ENCODE measurements at regions of chr2 and their contacts with region 1.

Region 1: DNA sequence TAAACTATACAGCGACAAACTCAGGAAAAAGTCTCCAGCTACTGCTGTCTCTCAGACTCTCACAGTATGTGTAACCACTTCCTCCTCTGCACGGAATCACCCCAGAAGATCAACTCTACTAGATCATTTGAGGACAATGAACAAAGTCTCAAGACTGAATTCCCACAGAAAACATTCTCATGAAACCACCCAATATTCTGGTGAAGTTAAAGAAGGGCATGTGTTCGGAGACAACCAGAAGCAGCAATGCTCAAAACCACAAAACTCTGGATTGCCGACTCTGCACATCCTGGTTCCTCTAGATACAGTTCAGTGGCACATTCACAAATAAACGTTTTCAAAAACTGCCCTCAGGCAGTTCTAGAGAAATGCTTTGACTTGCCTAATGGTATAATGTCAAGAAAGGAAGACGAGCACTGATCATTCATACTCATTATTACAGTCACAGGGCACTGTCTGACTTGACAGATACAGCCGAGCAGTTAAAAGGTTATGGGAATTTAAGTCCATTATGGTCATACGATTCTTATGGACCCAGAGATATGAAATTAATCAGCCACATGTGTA is 91.9 kb upstream of the STK17B start:
- DNase-seq: peak in 7 of 9 donors; percentile 70 to 88 (median 83)
- ATAC-seq: peak; percentile 90
- H3K4me3 ChIP-seq: peak overlapping the region; percentile 31
- H3K4me3 Mint-ChIP-seq: peak overlapping the region; percentile 63 to 90 (median 82)
- H3K27ac ChIP-seq: peak overlapping the region; percentile 87
- H3K27ac Mint-ChIP-seq: peak overlapping the region; percentile 90 to 99 (median 97)
- H3K4me1 ChIP-seq: peaks cover 53 to 82% of the 10 kb centered on the region in 2 donors
- H3K4me1 Mint-ChIP-seq: peaks cover 39 to 94% (median 89%) of the 10 kb centered on the region in 7 donors
- H3K27me3 ChIP-seq: no peaks in the 10 kb centered on the region
- H3K27me3 Mint-ChIP-seq: no peaks in the 10 kb centered on the region

Region 2: GRCh38 chr2:194464964-194465638 is 1798.2 kb before region 1 on chr2:
- CTCF ChIA-PET with region 1: no interaction called
- POLR2A ChIA-PET with region 1: no interaction called
- intact Hi-C with region 1: loop called in 1 of 2 experiments (anchors 5 kb)
- DNase-seq: peak in 2 of 9 donors; percentile 11 to 25
- ATAC-seq: no peak
- H3K4me3 ChIP-seq: no peak overlapping the region
- H3K4me3 Mint-ChIP-seq: no peak overlapping the region
- H3K27ac ChIP-seq: no peak overlapping the region
- H3K27ac Mint-ChIP-seq: no peak overlapping the region
- H3K4me1 ChIP-seq: no peaks in the 10 kb centered on the region
- H3K4me1 Mint-ChIP-seq: no peaks in the 10 kb centered on the region
- H3K27me3 ChIP-seq: no peaks in the 10 kb centered on the region
- H3K27me3 Mint-ChIP-seq: no peaks in the 10 kb centered on the region

Region 3: GRCh38 chr2:196000551-196000950 is 262.7 kb before region 1 on chr2:
- CTCF ChIA-PET with region 1: no interaction called
- POLR2A ChIA-PET with region 1: no interaction called
- intact Hi-C with region 1: no loop called
- DNase-seq: no peak
- ATAC-seq: no peak
- H3K4me3 ChIP-seq: no peak overlapping the region
- H3K4me3 Mint-ChIP-seq: no peak overlapping the region
- H3K27ac ChIP-seq: no peak overlapping the region
- H3K27ac Mint-ChIP-seq: no peak overlapping the region
- H3K4me1 ChIP-seq: no peaks in the 10 kb centered on the region
- H3K4me1 Mint-ChIP-seq: peaks cover 0 to 14% (median 11%) of the 10 kb centered on the region in 7 donors
- H3K27me3 ChIP-seq: no peaks in the 10 kb centered on the region
- H3K27me3 Mint-ChIP-seq: peaks cover 0 to 8% (median 0%) of the 10 kb centered on the region in 5 donors

Region 4: DNA sequence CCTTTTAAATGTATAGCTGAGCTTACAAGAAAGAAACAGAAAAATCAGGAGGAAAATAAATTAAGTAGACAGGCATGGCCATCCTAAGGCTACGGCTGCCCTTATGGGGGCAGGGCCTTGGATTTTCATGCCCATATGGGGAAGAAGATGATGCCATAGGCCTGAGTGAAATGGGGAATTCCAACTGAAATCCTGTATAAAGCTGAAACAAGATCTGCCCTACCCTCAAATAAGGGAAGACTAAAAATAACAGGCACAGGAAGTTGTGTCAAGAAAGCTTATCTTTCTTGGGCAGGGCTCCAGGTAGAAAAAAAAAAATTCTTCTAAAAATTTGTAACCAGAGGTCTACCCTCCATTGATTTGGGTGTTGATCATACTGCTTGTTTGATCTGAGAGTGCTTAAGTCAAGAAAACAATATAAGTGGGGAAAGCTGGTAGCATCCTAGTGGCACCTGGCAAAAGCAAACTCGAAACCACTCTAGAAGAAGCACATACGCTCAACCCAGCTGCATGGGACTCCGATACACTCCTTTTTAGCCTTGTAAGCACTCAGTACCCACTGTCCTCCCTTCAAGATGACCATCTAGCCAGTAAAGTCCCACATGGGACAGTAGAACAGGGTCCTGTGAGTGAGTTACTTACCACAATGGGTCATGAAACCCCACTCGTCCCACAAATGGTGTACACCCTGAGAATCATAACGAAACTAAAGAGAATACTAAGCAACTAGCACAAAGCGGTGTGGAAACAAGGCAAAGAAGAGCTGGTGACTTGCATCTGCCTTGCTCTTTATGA is 216.9 kb before region 1 on chr2:
- CTCF ChIA-PET with region 1: no interaction called
- POLR2A ChIA-PET with region 1: no interaction called
- intact Hi-C with region 1: no loop called
- DNase-seq: no peak
- ATAC-seq: no peak
- H3K4me3 ChIP-seq: no peak overlapping the region
- H3K4me3 Mint-ChIP-seq: no peak overlapping the region
- H3K27ac ChIP-seq: no peak overlapping the region
- H3K27ac Mint-ChIP-seq: peak overlapping the region in 1 of 9 donors; percentile 75
- H3K4me1 ChIP-seq: no peaks in the 10 kb centered on the region
- H3K4me1 Mint-ChIP-seq: peaks cover 0 to 13% (median 9%) of the 10 kb centered on the region in 7 donors
- H3K27me3 ChIP-seq: no peaks in the 10 kb centered on the region
- H3K27me3 Mint-ChIP-seq: peaks cover 2 to 25% (median 3%) of the 10 kb centered on the region in 5 donors

Region 5: GRCh38 chr2:196205881-196206435 is 57.3 kb before region 1 on chr2:
- CTCF ChIA-PET with region 1: no interaction called
- POLR2A ChIA-PET with region 1: interaction called, 4 read pairs
- intact Hi-C with region 1: loop called (anchors 1 kb)
- DNase-seq: no peak
- ATAC-seq: no peak
- H3K4me3 ChIP-seq: no peak overlapping the region
- H3K4me3 Mint-ChIP-seq: no peak overlapping the region
- H3K27ac ChIP-seq: no peak overlapping the region
- H3K27ac Mint-ChIP-seq: peak overlapping the region in 7 of 9 donors; percentile 28 to 85 (median 66)
- H3K4me1 ChIP-seq: peaks cover 17 to 31% of the 10 kb centered on the region in 2 donors
- H3K4me1 Mint-ChIP-seq: peaks cover 29 to 75% (median 51%) of the 10 kb centered on the region in 7 donors
- H3K27me3 ChIP-seq: no peaks in the 10 kb centered on the region
- H3K27me3 Mint-ChIP-seq: no peaks in the 10 kb centered on the region

Region 6: GRCh38 chr2:196233021-196233804 is 30.1 kb before region 1 on chr2:
- CTCF ChIA-PET with region 1: interaction called, 6 read pairs
- POLR2A ChIA-PET with region 1: interaction called, 215 read pairs
- intact Hi-C with region 1: no loop called
- DNase-seq: no peak
- ATAC-seq: no peak
- H3K4me3 ChIP-seq: peak overlapping the region; percentile 19
- H3K4me3 Mint-ChIP-seq: peak overlapping the region in 8 of 10 donors; percentile 29 to 71 (median 46)
- H3K27ac ChIP-seq: peak overlapping the region; percentile 84
- H3K27ac Mint-ChIP-seq: peak overlapping the region; percentile 89 to 99 (median 97)
- H3K4me1 ChIP-seq: peaks cover 31 to 72% of the 10 kb centered on the region in 2 donors
- H3K4me1 Mint-ChIP-seq: peaks cover 36 to 97% (median 89%) of the 10 kb centered on the region in 7 donors
- H3K27me3 ChIP-seq: no peaks in the 10 kb centered on the region
- H3K27me3 Mint-ChIP-seq: no peaks in the 10 kb centered on the region

Region 7: GRCh38 chr2:196249860-196250259 is 13.4 kb before region 1 on chr2:
- CTCF ChIA-PET with region 1: interaction called, 6 read pairs
- POLR2A ChIA-PET with region 1: interaction called, 215 read pairs
- intact Hi-C with region 1: loop called (anchors 1 kb)
- DNase-seq: no peak
- ATAC-seq: peak; percentile 80
- H3K4me3 ChIP-seq: no peak overlapping the region
- H3K4me3 Mint-ChIP-seq: peak overlapping the region; percentile 4 to 69 (median 44)
- H3K27ac ChIP-seq: no peak overlapping the region
- H3K27ac Mint-ChIP-seq: peak overlapping the region; percentile 15 to 89 (median 80)
- H3K4me1 ChIP-seq: peaks cover 9 to 54% of the 10 kb centered on the region in 2 donors
- H3K4me1 Mint-ChIP-seq: peaks cover 47 to 93% (median 89%) of the 10 kb centered on the region in 7 donors
- H3K27me3 ChIP-seq: no peaks in the 10 kb centered on the region
- H3K27me3 Mint-ChIP-seq: no peaks in the 10 kb centered on the region